Heart right ventricle (tissue), 16 donors: ENCODE measurements at regions of chr10 and their contacts with region 1.

Region 1: GRCh38 chr10:17454161-17455014 is at the start of gene ST8SIA6:
- DNase-seq: peak; percentile 34 to 64
- ATAC-seq: peak; percentile 66 to 84 (median 80)
- H3K4me3 ChIP-seq: peak within 1 kb of the TSS; percentile 39 to 72 (median 61)
- H3K27ac ChIP-seq: peak within 1 kb of the TSS; percentile 68 to 89 (median 81)
- H3K4me1 ChIP-seq: peaks cover 0 to 18% (median 8%) of the 10 kb centered on the region in 9 donors
- H3K27me3 ChIP-seq: peaks cover 0 to 45% (median 13%) of the 10 kb centered on the region in 7 donors
- CTCF ChIP-seq: peak in 2 of 9 donors; percentile 24 to 28
- total RNA-seq, gene ST8SIA6: 3.3 to 12.8 (median 8.9) TPM

Region 2: DNA sequence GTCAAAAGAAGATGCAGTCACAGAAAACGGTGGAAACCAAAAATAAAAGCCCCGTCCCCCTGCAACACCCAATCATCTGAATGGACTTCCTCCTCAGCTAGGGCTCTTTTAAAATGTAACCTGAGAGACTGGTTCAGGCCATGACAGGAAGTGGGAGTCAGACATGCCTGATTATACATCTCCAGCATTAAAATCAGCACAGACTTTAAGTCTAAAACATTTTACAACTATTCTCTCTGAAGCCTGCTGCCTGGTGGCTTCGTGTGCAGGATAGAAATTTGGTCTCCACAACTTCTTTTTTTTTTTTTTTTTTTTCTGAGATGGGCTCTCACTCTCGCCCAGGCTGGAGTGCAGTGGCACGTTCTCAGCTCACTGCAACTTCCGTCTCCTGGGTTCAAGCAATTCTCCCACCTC is 132.4 kb after region 1 on chr10:
- intact Hi-C with region 1: loop called in 2 of 10 experiments (anchors 10 kb)
- DNase-seq: no peak
- ATAC-seq: peak in 6 of 8 donors; percentile 11 to 58 (median 40)
- H3K4me3 ChIP-seq: no peak overlapping the region
- H3K27ac ChIP-seq: no peak overlapping the region
- H3K4me1 ChIP-seq: peaks cover 0 to 9% (median 0%) of the 10 kb centered on the region in 9 donors
- H3K27me3 ChIP-seq: no peaks in the 10 kb centered on the region
- CTCF ChIP-seq: no peak